Motor neuron (in vitro differentiated cells): ENCODE measurements at regions of chr6 and their contacts with region 1.

Region 1: GRCh38 chr6:29792123-29793035 is 35.2 kb upstream of the HLA-G start:
- ATAC-seq: peak; percentile 41 to 95 (median 72)
- H3K4me3 ChIP-seq: peak overlapping the region in 4 of 5 donors; percentile 17 to 41 (median 30)
- H3K27ac ChIP-seq: no peak overlapping the region
- H3K4me1 ChIP-seq: no peaks in the 10 kb centered on the region

Region 2: DNA sequence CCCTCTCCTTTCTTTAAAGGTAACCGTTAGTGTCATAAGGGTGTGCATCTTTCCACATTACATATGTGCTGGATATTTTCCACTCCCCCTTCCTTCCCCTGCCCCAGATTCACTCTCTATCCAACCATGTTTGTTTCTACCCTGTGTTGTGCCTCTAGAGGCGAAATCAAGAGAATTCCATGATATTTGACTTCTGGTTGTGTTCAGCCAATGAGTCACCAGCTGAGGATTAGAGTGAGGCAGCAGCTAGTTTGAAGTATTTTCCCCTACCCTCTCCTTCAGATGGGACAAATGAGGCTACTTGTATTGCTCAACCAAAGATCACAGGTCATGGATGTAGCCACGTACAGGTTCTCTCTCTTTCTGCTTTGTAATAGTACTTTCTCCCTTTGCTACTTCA is 646.2 kb before region 1 on chr6:
- in situ Hi-C with region 1: no loop called
- ATAC-seq: no peak
- H3K4me3 ChIP-seq: no peak overlapping the region
- H3K27ac ChIP-seq: no peak overlapping the region
- H3K4me1 ChIP-seq: no peaks in the 10 kb centered on the region

Region 3: GRCh38 chr6:29953001-29953441 is 160.6 kb after region 1 on chr6:
- in situ Hi-C with region 1: loop called in 1 of 9 experiments (anchors 10 kb)
- ATAC-seq: peak in 2 of 8 experiments; percentile 22 to 80
- H3K4me3 ChIP-seq: no peak overlapping the region
- H3K27ac ChIP-seq: no peak overlapping the region
- H3K4me1 ChIP-seq: no peaks in the 10 kb centered on the region